Activated CD4-positive, alpha-beta memory T cell treated with anti-CD3 and anti-CD28 coated beads for 36 hours (primary cell): ENCODE measurements at regions of chr22 and their contacts with region 1.

Region 1: GRCh38 chr22:40289991-40290459 is 56.3 kb upstream of the ADSL start:
- DNase-seq: peak; percentile 80
- H3K4me3 Mint-ChIP-seq: peak overlapping the region; percentile 51
- H3K27ac Mint-ChIP-seq: peak overlapping the region; percentile 95
- H3K4me1 Mint-ChIP-seq: peaks cover 63% of the 10 kb centered on the region
- H3K27me3 Mint-ChIP-seq: no peaks in the 10 kb centered on the region

Region 2: DNA sequence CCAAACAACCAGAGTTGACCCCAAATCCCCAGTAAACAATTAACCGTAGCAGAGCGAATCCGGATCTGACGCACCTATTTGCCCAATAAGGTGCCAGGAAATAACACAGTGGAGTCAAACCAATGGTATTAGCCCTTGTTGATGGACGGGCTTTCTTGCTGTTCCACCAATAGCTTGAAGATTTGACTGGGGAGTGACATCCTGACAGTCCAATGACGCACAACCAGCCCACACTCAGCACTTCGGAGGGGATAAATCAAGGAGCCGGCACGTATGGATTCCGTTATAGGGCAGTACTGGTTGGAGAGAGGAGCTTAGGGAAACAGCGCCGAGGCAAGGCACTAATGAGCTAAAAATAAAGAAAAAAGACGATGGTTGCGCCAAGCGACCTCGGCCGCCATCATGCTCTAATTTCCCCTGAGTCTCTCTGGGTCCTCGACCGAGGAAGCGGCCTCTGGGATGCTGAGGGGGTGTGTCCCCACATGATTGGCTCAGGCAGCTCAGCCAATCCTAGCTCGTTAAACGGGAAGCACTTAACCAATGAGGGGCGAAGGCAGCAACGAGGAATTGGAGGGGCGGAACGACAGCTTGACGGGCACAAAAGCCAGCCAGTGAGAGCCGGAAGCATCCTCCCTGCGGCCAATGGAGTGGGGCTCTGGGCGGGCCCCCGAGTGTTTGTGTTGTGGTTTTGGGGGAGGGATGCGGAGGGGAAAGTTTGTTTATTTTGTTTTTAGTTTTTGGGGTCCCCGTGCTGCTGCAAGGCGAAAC is 245.7 kb before region 1 on chr22:
- CTCF ChIA-PET with region 1: no interaction called
- POLR2A ChIA-PET with region 1: interaction called, 7 read pairs
- intact Hi-C with region 1: loop called (anchors 2 kb)
- DNase-seq: peak; percentile 99
- H3K4me3 Mint-ChIP-seq: peak overlapping the region; percentile 93
- H3K27ac Mint-ChIP-seq: peak overlapping the region; percentile 99
- H3K4me1 Mint-ChIP-seq: peaks cover 27% of the 10 kb centered on the region
- H3K27me3 Mint-ChIP-seq: peaks cover 6% of the 10 kb centered on the region

Region 3: GRCh38 chr22:40210818-40211217 is 79.2 kb before region 1 on chr22:
- CTCF ChIA-PET with region 1: no interaction called
- POLR2A ChIA-PET with region 1: no interaction called
- intact Hi-C with region 1: no loop called
- DNase-seq: no peak
- H3K4me3 Mint-ChIP-seq: no peak overlapping the region
- H3K27ac Mint-ChIP-seq: peak overlapping the region; percentile 60
- H3K4me1 Mint-ChIP-seq: peaks cover 69% of the 10 kb centered on the region
- H3K27me3 Mint-ChIP-seq: no peaks in the 10 kb centered on the region

Region 4: DNA sequence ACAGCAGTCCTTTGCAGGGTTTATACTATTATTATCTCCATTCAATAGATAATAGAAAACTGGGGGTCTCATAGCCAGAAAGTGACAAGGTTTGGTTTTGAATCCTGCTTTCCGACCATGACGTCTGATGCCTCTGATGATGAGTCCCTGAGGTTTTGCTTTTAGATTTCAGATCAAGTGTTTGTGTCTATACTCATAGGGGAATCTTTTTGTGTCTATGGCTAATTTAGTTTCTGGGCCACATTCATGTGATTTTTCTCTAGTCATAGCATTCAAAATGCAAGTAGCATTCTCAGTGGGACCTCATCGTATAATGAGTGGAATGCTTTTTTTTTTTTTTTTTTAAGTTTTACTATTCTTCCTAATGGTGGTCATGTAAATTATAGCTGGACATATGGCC is 39.4 kb before region 1 on chr22:
- CTCF ChIA-PET with region 1: interaction called, 5 read pairs
- POLR2A ChIA-PET with region 1: interaction called, 3 read pairs
- intact Hi-C with region 1: loop called (anchors 2 kb)
- DNase-seq: peak; percentile 73
- H3K4me3 Mint-ChIP-seq: no peak overlapping the region
- H3K27ac Mint-ChIP-seq: peak overlapping the region; percentile 82
- H3K4me1 Mint-ChIP-seq: peaks cover 79% of the 10 kb centered on the region
- H3K27me3 Mint-ChIP-seq: no peaks in the 10 kb centered on the region

Region 5: GRCh38 chr22:40258451-40259046 is 31.5 kb before region 1 on chr22:
- CTCF ChIA-PET with region 1: no interaction called
- POLR2A ChIA-PET with region 1: interaction called, 5 read pairs
- intact Hi-C with region 1: loop called (anchors 1 kb)
- DNase-seq: peak; percentile 31
- H3K4me3 Mint-ChIP-seq: no peak overlapping the region
- H3K27ac Mint-ChIP-seq: peak overlapping the region; percentile 75
- H3K4me1 Mint-ChIP-seq: peaks cover 67% of the 10 kb centered on the region
- H3K27me3 Mint-ChIP-seq: no peaks in the 10 kb centered on the region

Region 6: GRCh38 chr22:40276996-40277823 is 12.8 kb before region 1 on chr22:
- CTCF ChIA-PET with region 1: no interaction called
- POLR2A ChIA-PET with region 1: interaction called, 5 read pairs
- intact Hi-C with region 1: loop called (anchors 1 kb)
- DNase-seq: no peak
- H3K4me3 Mint-ChIP-seq: no peak overlapping the region
- H3K27ac Mint-ChIP-seq: peak overlapping the region; percentile 93
- H3K4me1 Mint-ChIP-seq: peaks cover 51% of the 10 kb centered on the region
- H3K27me3 Mint-ChIP-seq: no peaks in the 10 kb centered on the region

Region 7: GRCh38 chr22:40326905-40327735 is 37.1 kb after region 1 on chr22:
- CTCF ChIA-PET with region 1: interaction called, 3 read pairs
- POLR2A ChIA-PET with region 1: interaction called, 3 read pairs
- intact Hi-C with region 1: loop called (anchors 1 kb)
- DNase-seq: no peak
- H3K4me3 Mint-ChIP-seq: no peak overlapping the region
- H3K27ac Mint-ChIP-seq: peak overlapping the region; percentile 77
- H3K4me1 Mint-ChIP-seq: peaks cover 94% of the 10 kb centered on the region
- H3K27me3 Mint-ChIP-seq: no peaks in the 10 kb centered on the region

Region 8: GRCh38 chr22:40332319-40332781 is 42.3 kb after region 1 on chr22:
- CTCF ChIA-PET with region 1: interaction called, 3 read pairs
- POLR2A ChIA-PET with region 1: no interaction called
- intact Hi-C with region 1: loop called (anchors 2 kb)
- DNase-seq: peak; percentile 44
- H3K4me3 Mint-ChIP-seq: peak overlapping the region; percentile 49
- H3K27ac Mint-ChIP-seq: peak overlapping the region; percentile 80
- H3K4me1 Mint-ChIP-seq: peaks cover 91% of the 10 kb centered on the region
- H3K27me3 Mint-ChIP-seq: no peaks in the 10 kb centered on the region